ENCODE measurements at regions of chr11 and their contacts with region 1.

Region 1: DNA sequence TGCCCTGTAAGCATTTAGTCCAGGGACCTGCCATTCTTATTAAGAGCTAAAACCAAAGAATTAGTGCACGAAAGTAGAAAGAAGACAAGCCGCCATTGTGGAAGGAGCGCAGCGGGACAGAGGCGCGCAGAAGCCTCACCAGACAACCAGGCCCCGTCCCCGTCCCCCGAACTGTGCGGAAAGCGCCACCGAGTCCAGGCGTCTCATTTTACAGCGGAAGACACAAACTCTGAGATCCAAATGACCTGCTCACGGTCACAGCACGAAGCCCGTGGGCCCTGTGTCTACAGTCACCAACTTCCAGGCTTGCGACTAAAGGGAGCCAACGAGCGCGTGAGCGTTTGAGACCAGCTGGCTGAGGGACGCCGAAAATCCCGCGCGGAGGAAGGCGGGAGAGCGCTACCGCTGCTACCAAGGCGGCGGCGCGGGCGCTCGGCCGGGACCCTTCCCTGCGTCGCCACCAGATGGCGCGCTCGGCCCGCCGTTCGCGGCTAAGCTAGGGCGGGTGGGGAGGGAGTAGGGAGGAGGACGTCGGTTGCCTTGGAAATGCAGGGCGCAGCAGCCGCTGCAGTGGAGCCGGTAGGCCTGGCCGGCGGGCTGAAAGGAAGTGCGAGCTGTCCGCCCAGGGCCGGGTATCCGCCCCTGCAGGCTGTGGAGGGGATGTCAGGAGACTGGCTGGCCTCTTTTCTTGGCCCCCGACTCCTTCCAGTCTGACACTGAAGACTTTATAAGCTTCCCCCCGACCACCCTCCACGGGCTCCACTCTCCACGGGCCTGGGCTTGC is 434 bp upstream of the CCDC83 start:
- DNase-seq: peak; percentile 92
- ATAC-seq: peak; percentile 100
- H3K4me3 ChIP-seq: peak overlapping the region; percentile 37
- H3K27ac ChIP-seq: peak overlapping the region; percentile 80 to 95
- H3K4me1 ChIP-seq: peaks cover 7% of the 10 kb centered on the region
- CTCF ChIP-seq: peak; percentile 96
- EP300 ChIP-seq: no peak
- POLR2A ChIP-seq: peak; percentile 24
- RAD21 ChIP-seq: peak; percentile 92 to 100

Region 2: DNA sequence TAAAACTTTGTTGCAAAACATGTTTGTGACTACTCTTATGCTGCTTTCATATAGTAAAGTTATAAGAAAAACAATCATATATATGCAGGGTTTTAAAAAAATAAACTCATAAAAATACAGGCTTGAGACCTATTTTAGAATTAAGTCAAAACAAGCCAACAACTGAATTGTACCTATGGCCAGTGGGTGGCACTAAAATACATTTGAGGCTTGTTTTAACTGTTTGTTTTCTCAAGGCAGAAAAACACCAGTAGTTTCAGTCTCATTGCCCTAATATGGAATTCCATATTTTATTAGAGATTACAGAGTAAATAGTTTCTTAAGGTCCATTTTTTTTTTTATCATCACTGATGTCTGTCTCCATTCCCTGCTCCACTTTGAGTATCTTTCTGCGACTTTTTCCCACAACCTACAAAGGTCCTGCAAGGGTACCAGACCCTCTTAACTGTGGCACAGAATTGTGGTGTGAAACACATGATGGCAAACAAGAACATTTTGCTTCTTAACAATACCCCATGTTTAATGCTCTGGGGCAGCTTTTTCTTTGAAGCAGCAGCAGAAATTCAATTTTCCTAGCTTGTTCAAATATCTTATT is 160.3 kb before region 1 on chr11:
- CTCF ChIA-PET with region 1: interaction called, 23 read pairs
- POLR2A ChIA-PET with region 1: no interaction called
- DNase-seq: peak; percentile 31 to 71
- ATAC-seq: peak; percentile 50 to 79; a peak in 5 of 6 replicates
- H3K4me3 ChIP-seq: no peak overlapping the region
- H3K27ac ChIP-seq: peak overlapping the region in 1 of 2 experiments; percentile 34; a peak in 2 of 6 replicates
- H3K4me1 ChIP-seq: peaks cover 15% of the 10 kb centered on the region
- CTCF ChIP-seq: peak; percentile 86
- EP300 ChIP-seq: no peak
- POLR2A ChIP-seq: no peak
- RAD21 ChIP-seq: peak; percentile 92 to 95

Region 3: GRCh38 chr11:85810871-85811611 is 43.7 kb before region 1 on chr11 and contains the start of gene SYTL2:
- CTCF ChIA-PET with region 1: interaction called, 12 read pairs
- POLR2A ChIA-PET with region 1: no interaction called
- DNase-seq: peak; percentile 58 to 75
- ATAC-seq: peak; percentile 89 to 97
- H3K4me3 ChIP-seq: peak within 1 kb of the TSS; percentile 52
- H3K27ac ChIP-seq: peak within 1 kb of the TSS; percentile 55 to 81
- H3K4me1 ChIP-seq: peaks cover 42% of the 10 kb centered on the region
- CTCF ChIP-seq: no peak; the same call in 1 of the 3 replicates
- EP300 ChIP-seq: no peak
- POLR2A ChIP-seq: peak; percentile 86
- RAD21 ChIP-seq: peak; percentile 4 to 42; a peak in 2 of 5 replicates
- polyA plus RNA-seq, gene SYTL2: 34.2 and 41.6 TPM in 2 replicates

Region 4: GRCh38 chr11:85835263-85835662 is 19.5 kb before region 1 on chr11:
- CTCF ChIA-PET with region 1: interaction called, 10 read pairs
- POLR2A ChIA-PET with region 1: no interaction called
- DNase-seq: no peak
- ATAC-seq: no peak
- H3K4me3 ChIP-seq: no peak overlapping the region
- H3K27ac ChIP-seq: no peak overlapping the region
- H3K4me1 ChIP-seq: peaks cover 20% of the 10 kb centered on the region
- CTCF ChIP-seq: no peak
- EP300 ChIP-seq: no peak
- POLR2A ChIP-seq: no peak
- RAD21 ChIP-seq: no peak

Region 5: DNA sequence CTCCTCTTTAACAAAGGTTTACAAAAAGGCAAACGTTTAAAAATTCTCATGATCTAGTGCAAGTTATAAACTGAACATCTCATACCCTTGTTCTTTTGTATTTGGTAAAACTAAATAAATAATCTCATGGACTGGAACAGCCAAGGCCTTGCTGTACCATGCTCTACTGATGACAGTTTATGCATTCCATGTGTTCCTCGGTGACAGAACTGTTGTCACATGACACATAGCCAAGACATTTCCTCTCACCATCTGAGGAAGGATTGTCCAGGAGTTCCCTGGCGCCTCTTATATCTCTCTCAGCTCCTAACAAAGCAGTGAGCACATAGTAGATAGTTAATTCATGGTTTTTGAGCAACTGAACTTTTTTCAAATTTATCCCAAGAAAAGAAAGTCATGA is 13.0 kb after region 1 on chr11:
- CTCF ChIA-PET with region 1: interaction called, 47 read pairs
- POLR2A ChIA-PET with region 1: no interaction called
- DNase-seq: no peak
- ATAC-seq: no peak
- H3K4me3 ChIP-seq: no peak overlapping the region
- H3K27ac ChIP-seq: no peak overlapping the region
- H3K4me1 ChIP-seq: no peaks in the 10 kb centered on the region
- CTCF ChIP-seq: no peak
- EP300 ChIP-seq: no peak
- POLR2A ChIP-seq: no peak
- RAD21 ChIP-seq: no peak

Region 6: GRCh38 chr11:86193297-86194095 is 338.7 kb after region 1 on chr11:
- CTCF ChIA-PET with region 1: interaction called, 24 read pairs
- POLR2A ChIA-PET with region 1: interaction called, 4 read pairs
- DNase-seq: peak; percentile 87 to 89
- ATAC-seq: peak; percentile 100
- H3K4me3 ChIP-seq: peak overlapping the region; percentile 29
- H3K27ac ChIP-seq: peak overlapping the region; percentile 50 to 81
- H3K4me1 ChIP-seq: peaks cover 15% of the 10 kb centered on the region; the same call in 2 of the 3 replicates
- CTCF ChIP-seq: peak; percentile 85
- EP300 ChIP-seq: no peak
- POLR2A ChIP-seq: no peak
- RAD21 ChIP-seq: peak; percentile 78 to 83

Region 7: GRCh38 chr11:86291466-86292262 is 436.9 kb after region 1 on chr11:
- CTCF ChIA-PET with region 1: interaction called, 27 read pairs
- POLR2A ChIA-PET with region 1: no interaction called
- DNase-seq: peak; percentile 49
- ATAC-seq: peak; percentile 71 to 74
- H3K4me3 ChIP-seq: no peak overlapping the region
- H3K27ac ChIP-seq: no peak overlapping the region
- H3K4me1 ChIP-seq: no peaks in the 10 kb centered on the region
- CTCF ChIP-seq: peak; percentile 90
- EP300 ChIP-seq: no peak
- POLR2A ChIP-seq: no peak
- RAD21 ChIP-seq: peak; percentile 82 to 86

Measured in A549 (cell line).